CD14-positive monocyte (primary cell): ENCODE measurements at regions of chr12 and their contacts with region 1.

Region 1: DNA sequence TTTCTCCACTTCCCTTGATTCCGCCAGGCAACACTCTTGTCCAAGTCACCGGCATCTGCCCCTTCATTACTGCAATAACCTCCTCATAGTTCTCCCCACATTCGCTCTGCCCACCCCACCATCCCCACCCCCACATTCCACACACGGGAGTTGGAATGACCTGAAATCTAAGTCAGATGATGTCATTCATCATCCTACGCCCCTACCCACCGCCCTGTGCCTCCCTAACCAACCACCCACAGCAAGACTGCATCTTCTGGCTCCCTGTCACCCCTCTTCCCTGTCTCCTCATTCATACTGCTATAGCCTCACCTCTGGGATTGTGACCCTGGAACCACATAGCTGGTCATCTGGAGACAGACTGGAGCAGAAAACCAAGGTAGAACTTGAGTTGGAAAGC is 7.9 kb upstream of the PWP1 start:
- DNase-seq: no peak
- H3K4me3 ChIP-seq: no peak overlapping the region
- H3K4me3 Mint-ChIP-seq: no peak overlapping the region
- H3K27ac ChIP-seq: no peak overlapping the region
- H3K27ac Mint-ChIP-seq: no peak overlapping the region
- H3K4me1 ChIP-seq: no peaks in the 10 kb centered on the region
- H3K4me1 Mint-ChIP-seq: no peaks in the 10 kb centered on the region
- H3K27me3 ChIP-seq: no peaks in the 10 kb centered on the region
- H3K27me3 Mint-ChIP-seq: peaks cover 7 to 12% (median 8%) of the 10 kb centered on the region in 3 donors
- CTCF ChIP-seq: no peak

Region 2: DNA sequence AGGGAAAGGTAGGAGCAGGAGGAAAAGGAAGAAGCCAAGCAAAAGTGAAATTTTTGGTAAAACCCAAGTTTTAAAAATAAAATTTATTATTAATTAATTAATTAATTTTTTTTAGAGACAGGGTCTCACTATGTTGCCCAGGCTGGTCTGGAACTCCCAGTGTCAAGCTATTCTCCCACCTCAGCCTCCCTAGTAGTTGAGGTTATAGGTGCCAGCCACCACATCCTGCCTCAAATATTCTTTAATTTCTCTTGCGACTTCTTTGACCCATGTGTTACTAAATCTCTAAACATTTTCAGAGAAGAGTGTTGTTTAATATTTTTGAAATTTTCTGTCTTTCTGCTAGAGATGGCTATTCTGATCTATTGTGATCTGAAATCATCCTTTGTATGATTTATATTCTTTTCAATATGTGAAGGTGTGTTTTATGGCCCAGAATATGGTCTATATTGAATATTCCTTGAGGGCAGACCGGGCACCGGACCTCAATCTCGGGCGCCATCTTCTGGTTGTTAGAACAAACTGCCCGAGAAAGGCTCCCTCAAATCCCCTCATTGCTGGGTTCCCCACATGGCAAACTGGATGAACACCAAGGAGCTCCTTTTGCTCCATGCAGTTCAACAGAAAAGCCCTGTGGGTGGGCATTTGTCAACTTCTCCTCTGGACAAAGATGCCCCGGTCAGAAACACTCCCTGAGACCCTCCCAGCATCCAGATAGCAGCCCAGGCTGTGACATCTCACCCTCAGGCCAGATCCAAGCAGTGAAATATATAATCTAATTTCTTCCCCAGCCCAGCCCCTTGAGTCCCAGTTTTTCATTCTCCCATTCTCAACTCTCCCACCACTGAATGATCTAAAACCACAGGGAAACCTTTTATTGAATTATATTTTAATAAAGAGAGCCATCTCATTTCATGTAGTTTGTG is 207.4 kb after region 1 on chr12:
- intact Hi-C with region 1: loop called (anchors 2 kb)
- DNase-seq: peak; percentile 44 to 64 (median 58)
- H3K4me3 ChIP-seq: no peak overlapping the region
- H3K4me3 Mint-ChIP-seq: no peak overlapping the region
- H3K27ac ChIP-seq: no peak overlapping the region
- H3K27ac Mint-ChIP-seq: no peak overlapping the region
- H3K4me1 ChIP-seq: no peaks in the 10 kb centered on the region
- H3K4me1 Mint-ChIP-seq: no peaks in the 10 kb centered on the region
- H3K27me3 ChIP-seq: peaks cover 0 to 2% of the 10 kb centered on the region in 2 donors
- H3K27me3 Mint-ChIP-seq: peaks cover 0 to 6% (median 5%) of the 10 kb centered on the region in 3 donors
- CTCF ChIP-seq: peak; percentile 75